ENCODE measurements at regions of chr9 and their contacts with region 1.

Region 1: DNA sequence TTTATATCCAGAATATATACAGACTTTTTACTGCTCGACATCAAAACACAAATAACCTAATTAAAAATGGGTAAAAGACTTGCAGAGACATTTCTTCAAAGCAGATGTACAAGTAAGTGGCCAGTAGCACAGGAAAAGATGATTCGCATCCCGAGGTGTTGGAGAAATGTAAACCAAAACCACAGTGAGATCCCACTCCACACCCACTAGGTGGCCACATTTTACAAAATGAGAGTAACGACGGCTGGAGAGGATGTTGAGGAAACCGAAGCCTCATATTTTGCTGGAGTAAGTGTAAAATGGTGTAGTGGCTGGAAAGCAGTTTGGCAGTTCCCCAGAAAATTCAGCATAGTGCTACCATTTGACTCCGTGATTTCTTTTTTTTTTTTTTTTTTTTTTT is 21.2 kb upstream of the GBGT1 start:
- DNase-seq: no peak
- H3K4me3 ChIP-seq: no peak overlapping the region
- H3K27ac ChIP-seq: no peak overlapping the region
- H3K4me1 ChIP-seq: no peaks in the 10 kb centered on the region
- H3K27me3 ChIP-seq: peaks cover 0 to 13% (median 9%) of the 10 kb centered on the region in 4 experiments; a peak in 4 of 7 replicates
- CTCF ChIP-seq: peak; percentile 9 to 58 (median 54)
- EP300 ChIP-seq: no peak
- POLR2A ChIP-seq: no peak
- RAD21 ChIP-seq: peak; percentile 46 to 62; a peak in 3 of 4 replicates

Region 2: DNA sequence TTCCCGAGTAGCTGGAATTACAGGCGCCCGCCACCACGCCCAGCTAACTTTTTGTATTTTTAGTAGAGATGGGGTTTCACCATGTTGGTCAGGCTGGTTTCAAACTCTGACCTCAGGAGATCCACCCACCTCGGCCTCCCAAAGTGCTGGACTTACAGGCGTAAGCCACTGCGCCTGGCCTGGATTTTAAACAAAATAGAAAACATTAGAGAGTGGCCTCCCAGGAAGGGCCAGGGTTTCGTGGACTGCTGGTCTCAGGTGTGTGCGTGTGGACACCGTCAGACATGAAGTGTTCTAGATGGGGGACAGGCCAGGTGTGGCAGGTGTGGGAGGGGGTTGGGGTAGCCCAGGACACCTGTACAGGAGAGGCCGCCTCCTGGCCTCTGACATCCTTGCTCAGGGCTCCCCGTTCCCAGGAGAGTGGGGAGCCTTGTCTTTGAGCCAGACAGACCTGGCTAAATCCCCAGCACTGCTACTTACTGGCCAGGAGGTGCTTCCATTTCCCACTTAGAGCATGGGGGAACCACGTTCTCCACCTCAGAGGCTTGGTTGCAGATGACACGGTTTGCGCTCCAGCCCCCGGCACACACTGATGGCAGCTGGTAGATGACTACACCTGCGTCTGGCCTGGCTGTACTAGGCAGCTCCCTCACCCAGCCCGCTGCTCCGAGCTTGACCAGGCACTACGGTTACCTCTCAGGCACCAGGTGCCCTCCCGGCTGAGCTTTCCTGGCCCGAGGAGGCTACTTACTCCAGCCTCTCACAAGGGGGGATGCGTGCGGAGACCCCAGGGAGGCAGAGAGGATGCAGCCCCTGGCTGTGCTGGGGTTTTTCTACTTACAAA is 14.0 kb before region 1 on chr9:
- CTCF ChIA-PET with region 1: interaction called, 96 read pairs
- POLR2A ChIA-PET with region 1: no interaction called
- DNase-seq: no peak
- H3K4me3 ChIP-seq: no peak overlapping the region
- H3K27ac ChIP-seq: no peak overlapping the region
- H3K4me1 ChIP-seq: no peaks in the 10 kb centered on the region; a peak in 1 of 7 replicates
- H3K27me3 ChIP-seq: no peaks in the 10 kb centered on the region; a peak in 3 of 7 replicates
- CTCF ChIP-seq: no peak
- EP300 ChIP-seq: no peak
- POLR2A ChIP-seq: no peak
- RAD21 ChIP-seq: no peak

Region 3: GRCh38 chr9:133225171-133226011 is 40.4 kb after region 1 on chr9:
- CTCF ChIA-PET with region 1: interaction called, 16 read pairs
- POLR2A ChIA-PET with region 1: no interaction called
- DNase-seq: peak in 1 of 2 experiments; percentile 37
- H3K4me3 ChIP-seq: no peak overlapping the region
- H3K27ac ChIP-seq: no peak overlapping the region
- H3K4me1 ChIP-seq: no peaks in the 10 kb centered on the region
- H3K27me3 ChIP-seq: no peaks in the 10 kb centered on the region
- CTCF ChIP-seq: no peak
- EP300 ChIP-seq: no peak
- POLR2A ChIP-seq: no peak
- RAD21 ChIP-seq: no peak

Region 4: GRCh38 chr9:133275105-133276000 is 90.4 kb after region 1 on chr9 and contains the start of gene ABO:
- CTCF ChIA-PET with region 1: interaction called, 12 read pairs
- POLR2A ChIA-PET with region 1: no interaction called
- DNase-seq: peak in 1 of 2 experiments; percentile 62
- H3K4me3 ChIP-seq: peak within 1 kb of the TSS; percentile 36 to 68 (median 37)
- H3K27ac ChIP-seq: no peak within 1 kb of the TSS
- H3K4me1 ChIP-seq: no peaks in the 10 kb centered on the region; a peak in 1 of 7 replicates
- H3K27me3 ChIP-seq: peaks cover 34 to 55% (median 47%) of the 10 kb centered on the region in 4 experiments
- CTCF ChIP-seq: peak in 1 of 3 experiments; percentile 23; a peak in 2 of 4 replicates
- EP300 ChIP-seq: no peak
- POLR2A ChIP-seq: no peak
- RAD21 ChIP-seq: peak in 1 of 2 experiments; percentile 26; a peak in 1 of 4 replicates
- total RNA-seq, gene ABO: not detected in 2 replicates

Region 5: DNA sequence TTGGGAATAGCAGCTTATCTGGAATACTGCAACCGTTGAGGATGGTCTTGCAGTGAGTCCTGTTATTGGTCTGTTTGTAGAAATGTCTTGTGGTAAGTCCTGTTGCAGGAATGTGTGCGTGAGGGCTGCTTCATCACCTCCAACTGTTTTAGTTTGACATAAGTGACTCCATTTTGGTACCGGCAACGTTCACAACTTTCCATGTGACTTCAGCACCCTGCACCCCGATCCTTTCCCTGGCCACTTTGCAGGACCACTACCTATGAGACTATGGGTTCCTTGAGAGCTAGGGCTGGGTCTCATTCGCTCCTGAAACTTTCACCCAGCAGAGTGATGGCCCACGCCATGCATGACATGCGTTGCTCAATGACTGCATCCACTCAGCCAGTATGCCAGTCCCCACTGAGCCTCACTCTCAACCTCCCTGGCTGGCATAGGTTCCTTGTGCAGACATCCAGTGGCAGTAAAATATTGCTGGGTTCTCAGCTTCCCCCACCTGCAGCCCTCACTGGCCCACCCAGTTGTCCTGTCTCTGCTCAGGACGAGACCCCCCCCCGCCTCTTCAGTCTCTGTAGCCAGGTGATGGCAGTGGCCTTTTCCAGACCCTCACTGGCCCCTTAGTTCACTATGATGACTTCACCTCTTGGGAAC is 143.0 kb after region 1 on chr9:
- CTCF ChIA-PET with region 1: interaction called, 123 read pairs
- POLR2A ChIA-PET with region 1: interaction called, 8 read pairs
- DNase-seq: no peak
- H3K4me3 ChIP-seq: no peak overlapping the region
- H3K27ac ChIP-seq: no peak overlapping the region
- H3K4me1 ChIP-seq: no peaks in the 10 kb centered on the region
- H3K27me3 ChIP-seq: no peaks in the 10 kb centered on the region
- CTCF ChIP-seq: no peak
- EP300 ChIP-seq: no peak
- POLR2A ChIP-seq: peak in 1 of 2 experiments; percentile 48; a peak in 1 of 3 replicates
- RAD21 ChIP-seq: no peak

Region 6: DNA sequence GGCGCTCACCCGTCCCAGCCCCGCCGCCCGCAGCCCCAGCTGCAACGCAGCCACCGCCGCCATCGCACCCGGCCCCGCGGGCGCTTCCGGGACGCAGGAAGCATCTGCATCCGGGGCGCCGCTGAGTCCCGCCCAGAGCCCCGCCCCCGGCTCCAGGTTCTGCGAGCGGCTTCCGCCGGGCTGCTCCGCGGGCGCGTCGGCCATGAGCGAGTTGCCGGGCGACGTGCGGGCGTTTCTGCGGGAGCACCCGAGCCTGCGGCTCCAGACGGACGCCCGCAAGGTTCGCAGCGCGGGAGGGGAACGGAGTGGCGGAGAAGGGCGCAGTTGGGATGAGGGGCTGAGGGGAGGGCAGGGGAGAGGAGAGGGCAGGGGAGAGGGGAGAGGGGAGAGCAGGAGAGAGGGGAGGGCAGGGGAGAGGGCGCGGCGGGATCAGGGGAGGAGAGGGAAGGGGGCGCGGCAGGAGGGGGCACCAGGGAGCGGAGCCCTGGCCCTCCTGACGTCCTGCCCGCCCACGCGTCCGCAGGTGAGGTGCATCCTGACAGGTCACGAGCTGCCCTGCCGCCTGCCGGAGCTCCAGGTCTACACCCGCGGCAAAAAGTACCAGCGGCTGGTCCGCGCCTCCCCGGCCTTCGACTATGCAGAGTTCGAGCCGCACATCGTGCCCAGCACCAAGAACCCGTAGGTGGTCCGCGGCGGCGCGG is 171.6 kb after region 1 on chr9 and contains the starts of genes SURF1 and SURF2:
- CTCF ChIA-PET with region 1: interaction called, 11 read pairs
- POLR2A ChIA-PET with region 1: no interaction called
- DNase-seq: peak in 1 of 2 experiments; percentile 89
- H3K4me3 ChIP-seq: peak within 1 kb of the TSS; percentile 72 to 97 (median 96)
- H3K27ac ChIP-seq: no peak within 1 kb of the TSS
- H3K4me1 ChIP-seq: peaks cover 0 to 8% (median 3%) of the 10 kb centered on the region in 4 experiments; a peak in 5 of 7 replicates
- H3K27me3 ChIP-seq: no peaks in the 10 kb centered on the region
- CTCF ChIP-seq: peak in 1 of 3 experiments; percentile 12; a peak in 1 of 4 replicates
- EP300 ChIP-seq: no peak
- POLR2A ChIP-seq: peak in 1 of 2 experiments; percentile 77; a peak in 2 of 3 replicates
- RAD21 ChIP-seq: no peak
- total RNA-seq, gene SURF1: 39.6 and 43.1 TPM in 2 replicates
- total RNA-seq, gene SURF2: 36.6 and 42.1 TPM in 2 replicates

Region 7: DNA sequence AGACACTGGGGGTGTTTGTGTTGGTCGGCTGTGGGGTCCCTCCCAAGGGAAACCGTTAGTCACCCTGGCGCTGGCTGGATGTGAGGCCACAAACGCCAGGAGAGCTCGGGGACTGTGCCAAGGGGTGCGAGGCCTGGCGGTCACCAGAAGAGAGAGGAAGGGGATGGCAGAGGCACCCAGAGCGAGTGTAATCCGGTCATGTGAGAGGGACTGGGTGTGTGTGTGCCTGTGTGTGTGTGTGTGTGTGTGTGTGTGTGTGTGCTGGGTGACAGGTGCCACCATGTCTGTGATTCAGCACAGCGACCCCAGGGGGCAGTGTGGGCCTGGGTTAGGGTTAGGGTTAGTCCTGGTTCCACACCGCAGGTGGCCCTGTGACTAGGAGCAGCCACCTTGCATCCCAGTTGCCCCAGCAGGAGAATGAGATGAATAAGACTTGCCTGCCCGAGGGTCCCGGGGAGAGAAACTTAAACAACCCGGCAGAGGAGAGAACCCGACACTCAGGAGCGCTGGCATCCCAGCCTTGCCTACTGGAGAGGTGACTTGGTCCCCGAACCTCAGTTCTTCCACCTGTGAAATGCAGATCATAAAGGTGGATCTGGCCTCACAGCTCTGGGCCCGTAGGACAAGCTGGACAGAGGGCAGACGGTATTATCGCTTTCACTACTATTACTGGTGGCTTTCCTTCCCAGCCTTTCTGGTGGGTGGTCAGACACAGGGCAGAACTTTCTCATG is 348.1 kb after region 1 on chr9:
- CTCF ChIA-PET with region 1: no interaction called
- POLR2A ChIA-PET with region 1: no interaction called
- DNase-seq: peak; percentile 44 to 93
- H3K4me3 ChIP-seq: no peak overlapping the region
- H3K27ac ChIP-seq: no peak overlapping the region
- H3K4me1 ChIP-seq: peaks cover 0 to 38% (median 21%) of the 10 kb centered on the region in 4 experiments; a peak in 6 of 7 replicates
- H3K27me3 ChIP-seq: peaks cover 0 to 31% (median 18%) of the 10 kb centered on the region in 4 experiments; a peak in 6 of 7 replicates
- CTCF ChIP-seq: peak in 2 of 3 experiments; percentile 82 to 89; a peak in 3 of 4 replicates
- EP300 ChIP-seq: no peak
- POLR2A ChIP-seq: no peak
- RAD21 ChIP-seq: peak; percentile 82 to 86